Mammary epithelial cell (primary cell): ENCODE measurements at regions of chr2 and their contacts with region 1.

Region 1: GRCh38 chr2:97697252-97698235 is 15.8 kb upstream of the ZAP70 start:
- DNase-seq: peak; percentile 61
- H3K4me3 ChIP-seq: no peak overlapping the region
- H3K27ac ChIP-seq: no peak overlapping the region
- H3K4me1 ChIP-seq: peaks cover 4% of the 10 kb centered on the region
- H3K27me3 ChIP-seq: no peaks in the 10 kb centered on the region
- CTCF ChIP-seq: peak; percentile 91 to 94

Region 2: GRCh38 chr2:97645695-97646629 is 51.6 kb before region 1 on chr2 and contains the start of gene COX5B:
- CTCF ChIA-PET with region 1: no interaction called
- dilution Hi-C with region 1: no loop called
- in situ Hi-C with region 1: no loop called
- intact Hi-C with region 1: loop called (anchors 10 kb)
- DNase-seq: peak; percentile 95
- H3K4me3 ChIP-seq: peak within 1 kb of the TSS; percentile 93 to 96 (median 95)
- H3K27ac ChIP-seq: peak within 1 kb of the TSS; percentile 74
- H3K4me1 ChIP-seq: peaks cover 7% of the 10 kb centered on the region
- H3K27me3 ChIP-seq: no peaks in the 10 kb centered on the region
- CTCF ChIP-seq: no peak
- total RNA-seq, gene COX5B: 120 to 181 TPM

Region 3: GRCh38 chr2:97747716-97748115 is 50.2 kb after region 1 on chr2:
- CTCF ChIA-PET with region 1: interaction called, 3 read pairs
- dilution Hi-C with region 1: no loop called
- in situ Hi-C with region 1: no loop called
- intact Hi-C with region 1: loop called (anchors 1 kb)
- DNase-seq: no peak
- H3K4me3 ChIP-seq: no peak overlapping the region
- H3K27ac ChIP-seq: no peak overlapping the region
- H3K4me1 ChIP-seq: peaks cover 8% of the 10 kb centered on the region
- H3K27me3 ChIP-seq: no peaks in the 10 kb centered on the region
- CTCF ChIP-seq: no peak

Region 4: GRCh38 chr2:98188351-98189049 is 491.0 kb after region 1 on chr2:
- CTCF ChIA-PET with region 1: interaction called, 18 read pairs
- dilution Hi-C with region 1: no loop called
- in situ Hi-C with region 1: no loop called
- intact Hi-C with region 1: loop called (anchors 1 kb)
- DNase-seq: peak; percentile 91
- H3K4me3 ChIP-seq: no peak overlapping the region
- H3K27ac ChIP-seq: no peak overlapping the region
- H3K4me1 ChIP-seq: peaks cover 10% of the 10 kb centered on the region
- H3K27me3 ChIP-seq: no peaks in the 10 kb centered on the region
- CTCF ChIP-seq: peak; percentile 51 to 55

Region 5: GRCh38 chr2:98378930-98379671 is 681.6 kb after region 1 on chr2:
- CTCF ChIA-PET with region 1: no interaction called
- dilution Hi-C with region 1: no loop called
- in situ Hi-C with region 1: loop called (anchors 10 to 25 kb)
- intact Hi-C with region 1: no loop called
- DNase-seq: peak; percentile 84
- H3K4me3 ChIP-seq: no peak overlapping the region
- H3K27ac ChIP-seq: no peak overlapping the region
- H3K4me1 ChIP-seq: peaks cover 14% of the 10 kb centered on the region
- H3K27me3 ChIP-seq: peaks cover 28% of the 10 kb centered on the region
- CTCF ChIP-seq: no peak